Calu3 (cell line): ENCODE measurements at regions of chr10 and their contacts with region 1.

Region 1: DNA sequence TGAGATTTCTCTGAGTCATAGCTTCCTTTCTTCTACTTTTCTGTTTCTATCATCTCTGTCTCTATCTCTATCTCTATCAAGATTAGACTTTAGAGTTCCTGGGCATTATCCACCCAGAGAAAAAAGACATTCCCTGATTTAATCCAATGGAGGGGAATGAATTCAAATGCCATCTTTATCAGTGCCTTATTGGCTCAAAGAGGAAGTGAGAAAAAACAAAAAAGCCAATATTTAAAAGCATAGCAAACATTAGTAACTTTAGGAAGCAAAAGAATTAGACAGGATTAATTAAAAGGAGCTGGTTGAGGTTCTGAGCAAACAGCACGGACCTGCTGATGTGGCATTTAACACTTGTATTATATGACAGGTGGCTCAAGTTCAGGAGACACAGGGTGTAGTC is 736.5 kb downstream of the REEP3 start:
- DNase-seq: no peak
- H3K4me3 Mint-ChIP-seq: no peak overlapping the region
- H3K27ac Mint-ChIP-seq: no peak overlapping the region
- H3K4me1 Mint-ChIP-seq: no peaks in the 10 kb centered on the region
- H3K27me3 Mint-ChIP-seq: no peaks in the 10 kb centered on the region
- CTCF ChIP-seq: no peak

Region 2: DNA sequence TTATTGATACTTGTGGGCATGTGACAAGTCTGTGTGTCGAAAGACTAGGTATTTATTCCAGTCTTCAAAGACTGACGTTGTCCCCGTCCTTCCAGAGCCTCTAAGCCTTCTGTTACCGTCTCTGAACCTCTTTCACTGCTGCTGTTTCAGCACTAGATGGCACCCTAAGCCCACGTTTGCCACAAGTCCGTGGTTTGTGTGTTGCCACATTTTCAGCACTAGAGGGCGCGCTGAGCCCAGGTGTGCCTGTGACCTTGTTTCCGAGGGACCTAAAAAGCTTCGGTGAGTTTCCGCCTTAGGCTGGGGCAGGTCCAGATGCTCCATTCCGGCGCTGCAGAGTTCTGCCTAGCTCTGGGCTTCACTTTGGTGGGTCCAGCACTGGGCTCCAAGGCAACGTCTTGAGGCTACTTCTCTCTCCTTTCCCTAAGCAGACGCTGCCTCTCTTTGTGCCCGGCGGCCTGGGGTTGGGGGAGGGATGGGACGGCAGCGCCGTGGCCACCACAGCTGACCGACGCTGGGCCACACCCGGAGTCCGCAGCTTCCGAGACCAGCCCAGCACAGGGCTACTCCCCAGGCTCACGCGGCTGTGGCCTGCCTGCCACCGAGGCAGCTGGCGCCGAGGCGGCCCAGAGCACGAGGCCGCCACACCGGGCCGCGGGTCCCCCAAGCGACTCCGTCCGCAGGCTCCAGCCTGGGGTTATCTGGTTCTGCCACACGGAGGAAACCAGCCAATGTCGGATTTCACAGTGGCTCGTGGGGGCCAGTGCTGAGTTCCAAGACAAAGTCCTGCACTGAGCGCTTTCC is 216.3 kb before region 1 on chr10:
- CTCF ChIA-PET with region 1: no interaction called
- intact Hi-C with region 1: loop called (anchors 10 kb)
- DNase-seq: peak; percentile 80
- H3K4me3 Mint-ChIP-seq: peak overlapping the region; percentile 53
- H3K27ac Mint-ChIP-seq: no peak overlapping the region
- H3K4me1 Mint-ChIP-seq: peaks cover 8% of the 10 kb centered on the region
- H3K27me3 Mint-ChIP-seq: peaks cover 3% of the 10 kb centered on the region
- CTCF ChIP-seq: peak; percentile 99

Region 3: DNA sequence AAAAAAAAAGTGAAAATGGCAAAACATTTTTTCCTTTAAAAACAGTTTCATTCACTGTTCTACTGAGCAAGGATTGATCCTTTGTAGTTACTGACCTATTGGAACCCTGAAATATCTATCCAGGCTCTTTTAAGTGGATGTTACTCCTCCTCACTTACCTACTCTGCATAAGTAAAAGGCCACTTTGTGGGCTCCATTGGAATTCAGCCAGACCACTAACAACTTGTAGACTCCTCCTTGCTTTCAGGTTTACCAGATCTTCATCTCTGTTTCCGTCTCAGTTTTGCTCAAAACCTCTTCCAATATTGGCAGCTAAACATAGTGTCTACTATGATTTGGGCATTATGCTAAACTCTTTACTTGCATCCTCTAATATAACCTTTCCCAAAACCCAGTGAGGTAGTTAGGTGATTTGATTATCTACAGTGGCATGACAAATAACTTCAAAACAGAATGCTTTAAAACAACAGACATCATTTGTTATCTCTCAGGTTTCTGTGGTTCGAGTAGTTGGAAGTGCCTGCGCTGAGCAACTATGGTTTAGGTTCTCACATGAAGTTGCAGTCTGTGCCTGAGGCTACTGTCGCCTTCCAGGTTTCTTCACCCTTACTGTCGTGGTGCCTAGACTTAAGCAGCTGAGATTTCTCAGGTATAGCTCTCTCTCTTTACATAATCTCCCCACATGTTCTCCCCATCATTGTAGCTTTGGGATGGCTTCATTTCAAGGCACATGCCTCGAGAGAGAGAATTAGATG is 38.3 kb before region 1 on chr10:
- CTCF ChIA-PET with region 1: no interaction called
- intact Hi-C with region 1: loop called (anchors 1 kb)
- DNase-seq: no peak
- H3K4me3 Mint-ChIP-seq: no peak overlapping the region
- H3K27ac Mint-ChIP-seq: no peak overlapping the region
- H3K4me1 Mint-ChIP-seq: no peaks in the 10 kb centered on the region
- H3K27me3 Mint-ChIP-seq: no peaks in the 10 kb centered on the region
- CTCF ChIP-seq: no peak

Region 4: DNA sequence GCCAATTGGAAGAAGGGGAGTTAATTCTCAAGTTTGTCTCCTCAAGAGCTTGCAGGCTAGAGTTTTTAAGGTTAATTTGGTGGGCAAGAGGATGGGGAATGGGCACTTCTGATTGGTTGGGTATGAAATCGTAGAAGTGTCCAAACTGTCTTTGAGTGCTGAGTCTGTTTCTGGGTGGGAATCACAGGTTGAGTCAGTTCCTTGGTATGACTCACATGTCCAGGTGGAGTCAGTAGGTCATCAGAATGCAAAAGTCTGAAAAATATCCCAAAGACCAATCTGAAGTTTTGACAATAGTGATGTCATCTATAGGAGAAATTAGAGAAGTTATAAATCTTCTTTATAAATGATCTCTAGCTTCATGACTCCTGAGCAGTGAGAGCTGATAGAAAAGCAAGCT is 515.7 kb after region 1 on chr10:
- CTCF ChIA-PET with region 1: no interaction called
- intact Hi-C with region 1: no loop called
- DNase-seq: no peak
- H3K4me3 Mint-ChIP-seq: no peak overlapping the region
- H3K27ac Mint-ChIP-seq: no peak overlapping the region
- H3K4me1 Mint-ChIP-seq: peaks cover 27% of the 10 kb centered on the region
- H3K27me3 Mint-ChIP-seq: no peaks in the 10 kb centered on the region
- CTCF ChIP-seq: no peak